Cardiac septum (tissue), 1 donor: ENCODE measurements at regions of chr1 and their contacts with region 1.

Region 1: DNA sequence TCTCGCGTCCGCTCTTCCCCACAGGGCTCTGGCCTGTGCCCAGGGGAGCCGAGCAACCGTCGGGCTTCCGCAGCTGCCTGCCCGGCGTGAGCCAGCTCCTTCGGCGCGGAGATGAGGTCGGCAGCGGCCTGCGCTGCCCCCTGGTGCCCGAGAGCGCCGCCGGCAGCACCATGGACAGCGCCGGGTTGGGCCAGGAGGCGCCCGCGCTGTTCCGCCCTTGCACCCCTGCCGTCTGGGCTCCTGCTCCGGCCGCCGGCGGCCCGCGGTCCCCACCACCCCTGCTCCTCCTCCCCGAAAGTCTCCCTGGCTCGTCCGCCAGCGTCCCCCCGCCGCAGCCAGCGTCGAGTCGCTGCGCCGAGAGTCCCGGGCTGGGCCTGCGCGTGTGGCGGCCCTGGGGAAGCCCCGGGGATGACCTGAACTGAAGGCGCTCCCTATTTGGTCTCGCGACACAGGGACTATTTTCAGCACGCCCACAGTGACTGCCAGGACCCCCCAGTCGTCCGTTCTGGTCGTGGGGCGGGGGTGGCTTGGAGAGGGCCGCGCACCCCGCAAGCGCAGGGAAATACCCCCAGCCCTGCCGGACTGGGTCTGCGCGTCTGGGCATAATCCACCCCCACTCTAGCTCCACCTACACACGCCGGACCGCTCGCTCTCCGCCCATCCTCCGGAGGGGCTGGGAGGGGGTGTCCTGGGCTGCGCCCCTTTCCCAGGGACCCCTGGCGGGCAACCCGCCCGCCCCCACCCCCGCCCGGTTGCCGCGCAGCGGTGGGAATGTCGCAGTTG is 1.3 kb downstream of the HES3 start:
- DNase-seq: no peak

Region 2: GRCh38 chr1:6033986-6034749 is 211.1 kb before region 1 on chr1:
- intact Hi-C with region 1: no loop called
- DNase-seq: no peak

Region 3: GRCh38 chr1:6052543-6053205 is 192.6 kb before region 1 on chr1:
- intact Hi-C with region 1: loop called (anchors 1 kb)
- DNase-seq: no peak

Region 4: GRCh38 chr1:6280761-6281451 is 35.6 kb after region 1 on chr1:
- intact Hi-C with region 1: loop called (anchors 2 kb)
- DNase-seq: no peak

Region 5: DNA sequence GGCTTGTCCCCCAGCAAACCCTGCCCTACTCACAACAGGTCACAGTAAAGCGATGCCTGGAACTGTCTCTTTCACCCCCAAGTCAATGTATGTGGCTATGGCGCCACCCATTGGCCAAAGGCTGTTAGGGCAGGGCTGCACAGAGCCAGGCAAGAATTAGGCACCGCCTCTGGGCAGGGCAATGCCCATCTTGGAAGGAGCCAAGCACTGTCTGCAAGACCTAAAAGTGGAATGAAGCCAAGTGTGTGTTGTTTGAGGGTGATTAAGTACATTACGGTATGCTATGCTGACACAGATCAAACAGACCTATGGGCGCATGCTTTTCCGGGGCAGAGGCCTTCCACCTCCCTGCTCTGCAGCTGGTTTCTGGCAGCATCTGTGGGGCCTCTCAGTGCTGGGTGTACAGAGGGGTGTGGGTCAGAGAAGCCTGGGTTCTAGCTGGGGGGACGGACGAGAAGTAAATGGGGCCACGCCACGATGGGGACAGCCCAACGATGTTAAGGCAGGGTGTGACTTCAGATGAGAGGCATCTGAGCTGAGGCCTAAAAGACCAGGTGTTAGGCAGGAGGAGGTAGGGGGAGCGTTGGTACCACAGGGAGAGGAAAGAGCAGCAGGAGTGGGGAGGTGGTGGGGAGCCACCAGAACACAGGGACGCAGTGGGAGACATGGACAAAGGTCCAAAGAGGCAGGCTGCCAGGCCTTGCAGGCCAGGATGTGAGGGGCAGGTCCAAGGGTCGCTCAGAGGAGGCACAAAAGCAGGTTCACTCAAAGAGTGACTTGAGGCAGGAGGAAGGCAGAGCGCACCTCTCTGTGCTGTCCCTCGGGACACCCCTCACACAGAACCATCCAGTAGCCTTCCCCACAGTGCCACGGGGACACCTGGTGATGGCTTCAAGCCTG is 98.5 kb after region 1 on chr1:
- intact Hi-C with region 1: loop called (anchors 1 kb)
- DNase-seq: no peak

Region 6: GRCh38 chr1:6401673-6402072 is 156.4 kb after region 1 on chr1:
- intact Hi-C with region 1: loop called (anchors 1 kb)
- DNase-seq: no peak

Region 7: DNA sequence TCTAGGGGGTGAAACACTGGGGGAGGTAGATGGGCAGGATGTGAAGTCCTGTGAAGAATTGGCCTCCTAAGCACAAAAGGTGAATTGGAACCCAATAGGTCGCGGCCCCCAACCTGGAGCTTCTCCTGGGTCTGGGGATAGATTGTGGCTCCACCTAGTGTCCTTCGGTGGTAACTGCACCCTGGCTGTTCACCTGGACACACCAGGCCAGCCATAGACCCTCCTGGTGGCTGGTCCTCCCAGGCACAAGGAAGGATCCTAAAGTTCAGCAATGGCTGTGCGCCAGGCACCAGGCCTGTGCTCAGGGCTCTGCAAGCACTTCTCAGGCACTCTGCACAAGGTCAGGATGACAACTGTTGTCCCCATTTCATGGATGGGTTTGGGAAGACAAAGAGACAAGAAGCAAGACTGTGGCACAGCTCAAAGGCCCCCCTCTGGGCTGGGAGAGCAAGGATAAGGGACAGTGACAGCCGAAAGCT is 192.8 kb after region 1 on chr1:
- intact Hi-C with region 1: loop called (anchors 5 kb)
- DNase-seq: peak; percentile 83